ENCODE measurements at regions of chr3 and their contacts with region 1.

Region 1: GRCh38 chr3:136861890-136862616 is at the start of gene NCK1:
- DNase-seq: peak; percentile 99
- H3K4me3 ChIP-seq: peak within 1 kb of the TSS; percentile 81 to 96 (median 95)
- H3K27ac ChIP-seq: peak within 1 kb of the TSS; percentile 83
- H3K4me1 ChIP-seq: peaks cover 13% of the 10 kb centered on the region
- H3K27me3 ChIP-seq: no peaks in the 10 kb centered on the region
- CTCF ChIP-seq: peak in 1 of 2 donors; percentile 23
- POLR2A ChIP-seq: peak; percentile 91
- total RNA-seq, gene NCK1: 45.1 and 52.2 TPM in 2 replicates

Region 2: GRCh38 chr3:136114421-136114820 is 747.6 kb before region 1 on chr3:
- CTCF ChIA-PET with region 1: no interaction called
- POLR2A ChIA-PET with region 1: no interaction called
- dilution Hi-C with region 1: no loop called
- intact Hi-C with region 1: no loop called
- DNase-seq: no peak
- H3K4me3 ChIP-seq: no peak overlapping the region
- H3K27ac ChIP-seq: no peak overlapping the region
- H3K4me1 ChIP-seq: no peaks in the 10 kb centered on the region
- H3K27me3 ChIP-seq: no peaks in the 10 kb centered on the region
- CTCF ChIP-seq: no peak
- POLR2A ChIP-seq: no peak

Region 3: DNA sequence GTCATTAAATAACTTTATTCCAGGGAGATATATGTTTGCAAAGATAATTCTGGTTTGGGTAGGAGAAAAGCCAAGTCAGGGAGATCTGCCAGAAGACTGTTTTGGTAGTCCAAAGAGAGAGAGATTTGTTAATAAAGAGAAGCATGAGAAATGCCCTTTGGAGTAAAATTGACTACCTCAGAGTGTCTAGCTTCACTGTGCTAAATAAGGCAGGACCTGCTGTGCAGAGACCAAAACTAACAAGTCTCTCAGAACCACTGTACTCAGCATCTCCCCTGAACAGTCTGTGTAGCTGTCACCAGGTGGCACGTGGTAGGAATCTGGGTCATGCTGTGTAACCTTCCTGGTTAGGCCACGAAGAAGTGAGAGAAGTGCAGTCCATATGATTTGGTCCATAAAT is 74.7 kb before region 1 on chr3:
- CTCF ChIA-PET with region 1: no interaction called
- POLR2A ChIA-PET with region 1: no interaction called
- dilution Hi-C with region 1: no loop called
- intact Hi-C with region 1: loop called (anchors 2 kb)
- DNase-seq: peak; percentile 50
- H3K4me3 ChIP-seq: no peak overlapping the region
- H3K27ac ChIP-seq: peak overlapping the region; percentile 87
- H3K4me1 ChIP-seq: peaks cover 15% of the 10 kb centered on the region
- H3K27me3 ChIP-seq: no peaks in the 10 kb centered on the region
- CTCF ChIP-seq: no peak
- POLR2A ChIP-seq: no peak

Region 4: DNA sequence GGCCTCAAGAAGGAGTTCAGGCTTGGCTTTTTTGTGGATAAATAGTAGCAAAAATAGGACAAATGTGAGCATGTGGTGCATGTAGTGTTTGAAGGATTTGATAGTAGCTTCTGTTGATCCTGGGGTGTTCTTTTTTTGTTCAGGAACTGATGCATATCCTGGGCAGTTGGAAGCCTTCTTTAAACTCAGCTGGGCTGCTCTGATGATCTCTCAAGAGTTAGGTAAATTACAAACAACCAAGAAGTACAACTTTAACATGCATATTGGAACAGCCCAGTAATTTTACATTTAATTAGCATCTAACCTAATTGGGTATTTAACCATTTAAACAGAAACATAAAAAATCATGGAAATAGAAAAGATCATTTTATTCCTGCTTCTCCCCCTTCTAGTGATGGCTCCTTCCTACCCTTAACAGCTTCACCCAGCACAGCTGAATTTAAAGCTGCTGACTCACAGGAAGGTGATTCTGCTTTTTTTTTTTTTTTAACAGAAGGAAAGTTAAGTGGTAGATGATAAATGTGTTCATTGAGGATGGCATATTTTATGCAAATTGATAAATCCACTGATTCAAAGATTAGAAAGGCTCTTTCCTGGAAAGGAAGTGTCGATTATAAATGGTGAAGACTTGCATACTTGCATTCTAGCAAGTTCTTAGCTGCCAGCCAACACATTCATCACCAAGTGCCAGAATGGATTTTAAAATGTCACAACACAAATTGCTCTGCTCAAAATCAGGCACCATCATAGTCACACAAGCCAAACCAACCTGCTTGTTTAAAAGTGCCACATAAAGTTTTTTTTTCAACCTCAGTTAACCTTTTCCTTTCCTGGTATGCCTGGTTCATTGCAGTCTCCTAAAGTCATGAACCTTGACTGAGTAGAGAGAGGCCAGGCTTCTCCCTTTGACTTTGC is 23.2 kb before region 1 on chr3:
- CTCF ChIA-PET with region 1: interaction called, 18 read pairs
- POLR2A ChIA-PET with region 1: interaction called, 8 read pairs
- dilution Hi-C with region 1: no loop called
- intact Hi-C with region 1: loop called (anchors 1 kb)
- DNase-seq: peak; percentile 88
- H3K4me3 ChIP-seq: peak overlapping the region in 1 of 3 experiments; percentile 33
- H3K27ac ChIP-seq: peak overlapping the region; percentile 86
- H3K4me1 ChIP-seq: peaks cover 54% of the 10 kb centered on the region
- H3K27me3 ChIP-seq: no peaks in the 10 kb centered on the region
- CTCF ChIP-seq: no peak
- POLR2A ChIP-seq: peak; percentile 25

Region 5: GRCh38 chr3:136893848-136894443 is 31.9 kb after region 1 on chr3:
- CTCF ChIA-PET with region 1: interaction called, 3 read pairs
- POLR2A ChIA-PET with region 1: interaction called, 6 read pairs
- dilution Hi-C with region 1: no loop called
- intact Hi-C with region 1: loop called (anchors 1 kb)
- DNase-seq: peak; percentile 94
- H3K4me3 ChIP-seq: peak overlapping the region in 1 of 3 experiments; percentile 3
- H3K27ac ChIP-seq: peak overlapping the region; percentile 92
- H3K4me1 ChIP-seq: peaks cover 40% of the 10 kb centered on the region
- H3K27me3 ChIP-seq: no peaks in the 10 kb centered on the region
- CTCF ChIP-seq: no peak
- POLR2A ChIP-seq: no peak

Region 6: DNA sequence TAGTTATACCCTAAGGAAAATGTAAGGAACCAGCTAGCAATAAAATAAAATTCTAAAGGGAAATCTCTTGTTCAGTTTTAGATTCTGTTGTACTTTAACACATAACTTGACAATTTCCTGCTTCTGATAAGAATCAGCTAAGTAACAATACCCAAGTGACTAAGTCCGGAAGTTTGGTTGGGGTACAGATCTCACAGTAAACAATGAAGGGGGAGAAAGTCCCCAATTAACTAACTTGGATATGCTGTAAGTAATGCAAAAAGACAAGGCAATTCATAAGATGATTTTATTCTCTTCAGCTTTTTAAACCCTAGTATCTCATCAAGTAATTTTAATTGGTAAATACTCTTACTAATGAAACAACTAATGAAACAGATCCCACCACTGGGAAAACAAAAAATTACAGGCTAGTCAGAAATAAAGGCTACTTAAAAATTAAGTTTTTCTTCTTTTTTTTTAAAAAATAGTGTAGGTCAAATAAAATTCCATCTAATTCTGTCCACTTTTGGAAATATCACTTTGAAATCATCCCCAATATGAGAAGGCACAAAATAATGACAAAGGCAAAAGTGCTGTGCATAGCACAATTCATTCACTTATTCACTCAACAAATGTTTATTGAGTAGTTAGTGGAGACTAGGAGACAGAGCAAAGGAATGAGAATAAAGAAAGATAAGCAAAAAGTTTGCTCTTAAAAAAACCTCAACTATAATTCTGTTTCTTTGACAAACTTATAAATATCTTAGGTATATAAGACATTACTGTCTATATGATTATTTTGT is 57.9 kb after region 1 on chr3:
- CTCF ChIA-PET with region 1: interaction called, 12 read pairs
- POLR2A ChIA-PET with region 1: interaction called, 9 read pairs
- dilution Hi-C with region 1: no loop called
- intact Hi-C with region 1: loop called (anchors 2 kb)
- DNase-seq: peak; percentile 92
- H3K4me3 ChIP-seq: peak overlapping the region in 1 of 3 experiments; percentile 9
- H3K27ac ChIP-seq: peak overlapping the region; percentile 74
- H3K4me1 ChIP-seq: peaks cover 32% of the 10 kb centered on the region
- H3K27me3 ChIP-seq: no peaks in the 10 kb centered on the region
- CTCF ChIP-seq: no peak
- POLR2A ChIP-seq: peak; percentile 64

Region 7: GRCh38 chr3:136938334-136938733 is 76.3 kb after region 1 on chr3:
- CTCF ChIA-PET with region 1: interaction called, 7 read pairs
- POLR2A ChIA-PET with region 1: interaction called, 3 read pairs
- dilution Hi-C with region 1: no loop called
- intact Hi-C with region 1: loop called (anchors 2 kb)
- DNase-seq: no peak
- H3K4me3 ChIP-seq: no peak overlapping the region
- H3K27ac ChIP-seq: peak overlapping the region; percentile 62
- H3K4me1 ChIP-seq: peaks cover 27% of the 10 kb centered on the region
- H3K27me3 ChIP-seq: no peaks in the 10 kb centered on the region
- CTCF ChIP-seq: no peak
- POLR2A ChIP-seq: no peak

Region 8: GRCh38 chr3:136994772-136995516 is 132.9 kb after region 1 on chr3:
- CTCF ChIA-PET with region 1: interaction called, 4 read pairs
- POLR2A ChIA-PET with region 1: no interaction called
- dilution Hi-C with region 1: no loop called
- intact Hi-C with region 1: loop called (anchors 5 kb)
- DNase-seq: peak; percentile 98
- H3K4me3 ChIP-seq: no peak overlapping the region
- H3K27ac ChIP-seq: peak overlapping the region; percentile 32
- H3K4me1 ChIP-seq: peaks cover 15% of the 10 kb centered on the region
- H3K27me3 ChIP-seq: no peaks in the 10 kb centered on the region
- CTCF ChIP-seq: no peak
- POLR2A ChIP-seq: no peak